CD4-positive, alpha-beta memory T cell (primary cell): ENCODE measurements at regions of chr12 and their contacts with region 1.

Region 1: DNA sequence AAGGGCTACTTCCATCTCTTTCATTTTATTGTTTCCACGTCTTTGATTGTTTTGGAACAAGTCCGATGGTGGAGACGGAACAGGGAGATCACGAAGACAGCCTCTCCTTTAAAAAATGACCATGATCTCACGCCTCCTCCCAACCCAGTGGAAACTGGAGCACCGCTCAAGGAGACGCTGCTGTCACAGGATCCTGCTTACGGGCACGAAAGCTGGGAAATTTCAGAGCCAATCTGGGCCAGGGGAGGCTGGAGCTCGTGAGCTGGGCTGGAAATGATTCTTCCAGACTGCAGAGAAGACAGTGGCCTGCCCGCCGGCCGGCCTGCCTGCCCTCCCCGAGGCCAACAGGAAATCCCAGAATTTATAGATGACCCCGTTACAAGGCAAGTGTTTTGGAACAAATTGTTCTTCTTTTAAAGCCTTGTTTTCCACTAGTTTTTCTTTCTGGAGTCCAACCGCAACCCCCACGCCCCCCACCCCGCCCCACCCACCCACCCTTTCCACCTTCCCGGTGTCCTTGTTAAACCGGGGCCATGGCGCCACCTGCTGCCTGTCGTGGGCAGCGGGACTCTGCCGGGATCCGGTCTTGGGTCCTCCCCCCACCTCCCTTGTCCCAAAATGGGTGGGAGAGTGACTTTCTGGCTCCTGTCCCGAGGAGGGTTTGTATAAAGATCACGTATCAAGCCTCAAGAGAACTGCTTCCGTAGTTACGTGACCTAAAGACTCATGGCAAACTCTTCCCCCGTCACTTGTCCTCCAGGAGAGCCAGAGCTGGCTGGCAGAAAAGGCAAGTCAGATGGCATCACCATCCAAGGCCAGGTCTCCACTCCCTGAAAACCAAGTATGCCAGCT is 40.3 kb downstream of the MAP1LC3B2 start:
- DNase-seq: peak; percentile 40 to 50 (median 47)
- H3K4me3 ChIP-seq: no peak overlapping the region
- H3K4me3 Mint-ChIP-seq: peak overlapping the region in 1 of 8 donors; percentile 45
- H3K27ac ChIP-seq: no peak overlapping the region
- H3K27ac Mint-ChIP-seq: peak overlapping the region in 1 of 7 donors; percentile 48
- H3K4me1 ChIP-seq: peaks cover 22% of the 10 kb centered on the region
- H3K4me1 Mint-ChIP-seq: peaks cover 15 to 24% (median 18%) of the 10 kb centered on the region in 4 donors
- H3K27me3 ChIP-seq: no peaks in the 10 kb centered on the region
- H3K27me3 Mint-ChIP-seq: no peaks in the 10 kb centered on the region

Region 2: DNA sequence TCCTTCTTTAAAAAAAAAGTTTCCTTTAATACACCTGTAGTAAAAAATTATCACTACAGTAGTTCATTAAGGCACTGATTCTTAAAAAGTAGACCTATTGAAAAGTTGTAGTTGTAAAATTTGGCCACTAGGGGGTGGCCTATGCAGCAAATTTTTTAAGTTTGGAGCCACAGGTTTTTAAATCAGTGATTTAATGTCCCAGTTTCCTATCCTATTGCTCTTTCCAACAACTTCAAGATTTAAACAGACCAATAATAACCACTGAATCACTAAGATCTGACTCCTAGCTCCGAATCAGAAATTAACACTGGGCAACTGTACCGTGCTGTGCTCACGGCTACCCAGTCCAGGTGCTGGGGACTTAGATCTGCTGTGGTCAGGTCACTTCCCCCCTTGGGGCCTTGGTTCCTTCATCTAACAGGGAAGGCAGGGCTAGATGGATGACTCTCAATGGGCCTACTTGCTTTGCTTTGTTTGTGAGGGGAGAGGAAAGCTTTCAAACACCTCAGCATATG is 601.3 kb before region 1 on chr12:
- CTCF ChIA-PET with region 1: interaction called, 36 read pairs
- POLR2A ChIA-PET with region 1: no interaction called
- intact Hi-C with region 1: loop called (anchors 1 kb)
- DNase-seq: peak in 4 of 5 donors; percentile 34 to 39 (median 36)
- H3K4me3 ChIP-seq: no peak overlapping the region
- H3K4me3 Mint-ChIP-seq: no peak overlapping the region
- H3K27ac ChIP-seq: no peak overlapping the region
- H3K27ac Mint-ChIP-seq: peak overlapping the region in 3 of 7 donors; percentile 22 to 60 (median 46)
- H3K4me1 ChIP-seq: no peaks in the 10 kb centered on the region
- H3K4me1 Mint-ChIP-seq: peaks cover 6 to 17% (median 9%) of the 10 kb centered on the region in 4 donors
- H3K27me3 ChIP-seq: no peaks in the 10 kb centered on the region
- H3K27me3 Mint-ChIP-seq: no peaks in the 10 kb centered on the region

Region 3: GRCh38 chr12:116066381-116067230 is 532.9 kb before region 1 on chr12:
- CTCF ChIA-PET with region 1: interaction called, 4 read pairs
- POLR2A ChIA-PET with region 1: no interaction called
- intact Hi-C with region 1: loop called (anchors 2 kb)
- DNase-seq: peak; percentile 39 to 55 (median 48)
- H3K4me3 ChIP-seq: no peak overlapping the region
- H3K4me3 Mint-ChIP-seq: peak overlapping the region in 2 of 8 donors; percentile 7 to 21
- H3K27ac ChIP-seq: no peak overlapping the region
- H3K27ac Mint-ChIP-seq: peak overlapping the region in 4 of 7 donors; percentile 0 to 75 (median 33)
- H3K4me1 ChIP-seq: peaks cover 13% of the 10 kb centered on the region
- H3K4me1 Mint-ChIP-seq: peaks cover 18 to 50% (median 29%) of the 10 kb centered on the region in 4 donors
- H3K27me3 ChIP-seq: no peaks in the 10 kb centered on the region
- H3K27me3 Mint-ChIP-seq: no peaks in the 10 kb centered on the region

Region 4: DNA sequence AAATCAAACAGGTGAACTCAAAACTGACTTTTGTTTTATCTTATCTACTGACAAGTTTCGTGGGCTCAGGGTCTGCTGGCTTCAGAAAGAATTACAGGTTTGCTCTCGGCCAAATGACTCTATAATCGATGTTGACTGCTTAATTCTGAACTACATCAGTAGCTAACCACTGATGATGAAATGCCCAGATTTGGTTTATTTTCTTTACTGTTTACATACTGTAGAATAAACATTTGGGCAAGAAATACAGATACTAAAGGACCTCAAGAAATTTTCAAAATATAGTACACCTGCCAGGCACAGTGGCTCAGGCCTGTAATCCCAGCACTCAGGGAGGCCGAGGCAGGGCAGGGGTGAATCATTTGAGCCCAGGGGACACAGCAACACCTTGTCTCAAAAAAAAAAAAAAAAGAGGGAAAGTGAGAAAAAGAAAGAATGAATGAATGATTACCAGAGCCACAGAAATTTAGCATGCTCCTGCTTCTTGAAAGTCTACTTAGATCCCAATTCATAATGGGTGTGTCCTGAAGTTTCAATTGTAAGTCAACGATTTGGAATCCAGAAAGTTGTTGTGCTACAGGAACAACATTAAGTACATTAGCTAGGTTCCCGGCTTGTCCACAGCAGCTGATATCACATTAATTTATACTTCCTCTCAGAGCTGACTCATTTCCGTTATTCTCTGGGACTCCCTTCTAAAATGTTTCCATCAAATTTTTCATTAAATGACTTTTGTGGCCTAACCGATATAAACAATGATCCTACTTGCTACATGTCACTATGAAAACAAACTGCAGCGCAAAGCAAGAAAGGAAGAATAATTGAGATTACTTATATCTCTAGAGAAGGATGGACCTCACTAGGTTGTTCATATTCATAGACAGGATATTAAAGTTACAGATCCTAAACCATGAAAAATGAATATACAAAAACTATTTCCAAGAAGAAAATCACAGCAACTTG is 456.3 kb before region 1 on chr12:
- CTCF ChIA-PET with region 1: interaction called, 19 read pairs
- POLR2A ChIA-PET with region 1: interaction called, 4 read pairs
- intact Hi-C with region 1: loop called (anchors 1 kb)
- DNase-seq: no peak
- H3K4me3 ChIP-seq: no peak overlapping the region
- H3K4me3 Mint-ChIP-seq: peak overlapping the region in 7 of 8 donors; percentile 12 to 68 (median 61)
- H3K27ac ChIP-seq: no peak overlapping the region
- H3K27ac Mint-ChIP-seq: peak overlapping the region in 4 of 7 donors; percentile 3 to 43 (median 14)
- H3K4me1 ChIP-seq: peaks cover 34% of the 10 kb centered on the region
- H3K4me1 Mint-ChIP-seq: peaks cover 40 to 56% (median 48%) of the 10 kb centered on the region in 4 donors
- H3K27me3 ChIP-seq: no peaks in the 10 kb centered on the region
- H3K27me3 Mint-ChIP-seq: no peaks in the 10 kb centered on the region

Region 5: DNA sequence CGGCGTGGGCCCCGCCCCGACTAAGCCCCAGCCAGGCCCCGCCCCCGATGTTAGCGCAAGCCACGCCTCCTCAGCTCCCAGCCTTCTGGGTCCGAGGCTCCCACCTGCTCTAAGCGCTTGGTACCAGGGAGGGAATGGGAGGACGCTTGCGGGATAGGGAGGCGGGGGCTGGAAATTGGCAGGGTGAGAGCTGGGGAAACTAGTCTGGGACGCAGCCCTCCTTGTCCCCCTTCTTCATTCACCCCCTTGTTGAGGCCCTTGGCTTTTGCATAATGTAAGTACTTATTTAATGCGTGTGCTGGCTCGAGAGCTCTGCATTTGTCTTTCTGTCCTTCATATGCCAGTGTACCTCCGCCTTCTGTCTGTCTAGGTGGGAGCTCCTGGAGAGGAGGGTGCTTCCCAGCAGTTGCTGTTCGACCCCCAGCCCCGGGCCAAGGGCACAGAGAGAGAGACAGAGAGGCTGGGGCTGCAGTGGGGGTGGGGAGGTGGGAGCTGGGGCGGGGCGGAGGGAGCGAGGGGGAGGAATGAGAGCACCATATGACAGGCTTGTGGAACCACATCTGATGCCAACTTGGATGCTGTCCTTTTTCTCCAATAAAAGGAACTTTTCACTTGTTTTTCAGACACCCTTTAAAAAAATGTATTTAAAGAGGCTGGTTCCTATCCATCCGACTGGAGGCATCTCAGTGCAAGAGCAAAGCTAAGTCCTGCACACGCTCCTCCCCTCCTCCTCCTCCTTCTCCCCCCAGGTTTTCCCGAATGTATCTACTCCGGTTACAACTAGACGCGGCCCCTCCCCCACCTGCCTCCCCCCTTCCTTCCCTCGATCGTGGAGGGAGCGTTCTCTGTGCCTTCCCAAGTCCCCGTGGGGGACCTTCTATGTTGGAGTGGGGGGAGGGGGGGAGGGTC is 65.9 kb before region 1 on chr12:
- CTCF ChIA-PET with region 1: interaction called, 8 read pairs
- POLR2A ChIA-PET with region 1: no interaction called
- intact Hi-C with region 1: loop called (anchors 10 kb)
- DNase-seq: peak; percentile 53 to 64 (median 62)
- H3K4me3 ChIP-seq: peak overlapping the region; percentile 76 to 88
- H3K4me3 Mint-ChIP-seq: peak overlapping the region; percentile 80 to 93 (median 90)
- H3K27ac ChIP-seq: no peak overlapping the region
- H3K27ac Mint-ChIP-seq: peak overlapping the region in 6 of 7 donors; percentile 48 to 87 (median 80)
- H3K4me1 ChIP-seq: peaks cover 22% of the 10 kb centered on the region
- H3K4me1 Mint-ChIP-seq: peaks cover 19 to 47% (median 32%) of the 10 kb centered on the region in 4 donors
- H3K27me3 ChIP-seq: no peaks in the 10 kb centered on the region
- H3K27me3 Mint-ChIP-seq: peaks cover 1 to 11% of the 10 kb centered on the region in 2 donors

Region 6: GRCh38 chr12:116673681-116674111 is 74.2 kb after region 1 on chr12:
- CTCF ChIA-PET with region 1: no interaction called
- POLR2A ChIA-PET with region 1: no interaction called
- intact Hi-C with region 1: no loop called
- DNase-seq: no peak
- H3K4me3 ChIP-seq: no peak overlapping the region
- H3K4me3 Mint-ChIP-seq: peak overlapping the region in 7 of 8 donors; percentile 8 to 93 (median 80)
- H3K27ac ChIP-seq: no peak overlapping the region
- H3K27ac Mint-ChIP-seq: peak overlapping the region in 5 of 7 donors; percentile 28 to 83 (median 48)
- H3K4me1 ChIP-seq: peaks cover 25% of the 10 kb centered on the region
- H3K4me1 Mint-ChIP-seq: peaks cover 21 to 35% (median 24%) of the 10 kb centered on the region in 4 donors
- H3K27me3 ChIP-seq: no peaks in the 10 kb centered on the region
- H3K27me3 Mint-ChIP-seq: no peaks in the 10 kb centered on the region

Region 7: DNA sequence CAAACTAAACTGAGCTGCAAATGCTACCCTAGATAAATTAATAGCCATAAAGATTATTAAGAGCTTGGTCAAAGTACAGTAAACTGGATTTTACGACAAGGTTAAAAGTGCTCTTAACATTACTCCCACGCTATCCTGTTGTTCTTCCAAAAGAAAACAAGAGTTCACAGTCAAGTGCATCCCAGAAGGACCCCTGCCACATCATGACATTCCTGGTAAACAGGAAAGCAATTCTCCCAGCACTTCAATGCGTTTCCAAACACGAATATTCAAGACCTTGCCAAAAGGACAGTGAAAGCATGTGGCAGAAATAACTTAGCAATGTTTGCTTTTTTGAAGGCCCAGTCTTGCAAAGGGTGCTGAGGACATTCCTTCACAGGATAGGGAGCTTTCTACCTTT is 127.2 kb after region 1 on chr12:
- CTCF ChIA-PET with region 1: no interaction called
- POLR2A ChIA-PET with region 1: no interaction called
- intact Hi-C with region 1: no loop called
- DNase-seq: no peak
- H3K4me3 ChIP-seq: no peak overlapping the region
- H3K4me3 Mint-ChIP-seq: no peak overlapping the region
- H3K27ac ChIP-seq: no peak overlapping the region
- H3K27ac Mint-ChIP-seq: no peak overlapping the region
- H3K4me1 ChIP-seq: no peaks in the 10 kb centered on the region
- H3K4me1 Mint-ChIP-seq: peaks cover 19 to 35% (median 28%) of the 10 kb centered on the region in 4 donors
- H3K27me3 ChIP-seq: no peaks in the 10 kb centered on the region
- H3K27me3 Mint-ChIP-seq: no peaks in the 10 kb centered on the region

Region 8: GRCh38 chr12:116861320-116861719 is 261.8 kb after region 1 on chr12:
- CTCF ChIA-PET with region 1: no interaction called
- POLR2A ChIA-PET with region 1: no interaction called
- intact Hi-C with region 1: no loop called
- DNase-seq: peak; percentile 13 to 53 (median 18)
- H3K4me3 ChIP-seq: no peak overlapping the region
- H3K4me3 Mint-ChIP-seq: no peak overlapping the region
- H3K27ac ChIP-seq: no peak overlapping the region
- H3K27ac Mint-ChIP-seq: no peak overlapping the region
- H3K4me1 ChIP-seq: peaks cover 6% of the 10 kb centered on the region
- H3K4me1 Mint-ChIP-seq: peaks cover 0 to 18% (median 5%) of the 10 kb centered on the region in 4 donors
- H3K27me3 ChIP-seq: peaks cover under 1% of the 10 kb centered on the region
- H3K27me3 Mint-ChIP-seq: peaks cover 27 to 30% of the 10 kb centered on the region in 2 donors